Activated CD4-positive, alpha-beta memory T cell treated with anti-CD3 and anti-CD28 coated beads for 36 hours (primary cell): ENCODE measurements at regions of chr7 and their contacts with region 1.

Region 1: GRCh38 chr7:87797798-87798403 is 78.3 kb downstream of the SLC25A40 start:
- DNase-seq: no peak
- H3K4me3 Mint-ChIP-seq: no peak overlapping the region
- H3K27ac Mint-ChIP-seq: no peak overlapping the region
- H3K4me1 Mint-ChIP-seq: no peaks in the 10 kb centered on the region
- H3K27me3 Mint-ChIP-seq: peaks cover 8% of the 10 kb centered on the region

Region 2: GRCh38 chr7:87658553-87658952 is 139.3 kb before region 1 on chr7:
- CTCF ChIA-PET with region 1: no interaction called
- POLR2A ChIA-PET with region 1: no interaction called
- intact Hi-C with region 1: no loop called
- DNase-seq: no peak
- H3K4me3 Mint-ChIP-seq: no peak overlapping the region
- H3K27ac Mint-ChIP-seq: no peak overlapping the region
- H3K4me1 Mint-ChIP-seq: no peaks in the 10 kb centered on the region
- H3K27me3 Mint-ChIP-seq: peaks cover 5% of the 10 kb centered on the region

Region 3: DNA sequence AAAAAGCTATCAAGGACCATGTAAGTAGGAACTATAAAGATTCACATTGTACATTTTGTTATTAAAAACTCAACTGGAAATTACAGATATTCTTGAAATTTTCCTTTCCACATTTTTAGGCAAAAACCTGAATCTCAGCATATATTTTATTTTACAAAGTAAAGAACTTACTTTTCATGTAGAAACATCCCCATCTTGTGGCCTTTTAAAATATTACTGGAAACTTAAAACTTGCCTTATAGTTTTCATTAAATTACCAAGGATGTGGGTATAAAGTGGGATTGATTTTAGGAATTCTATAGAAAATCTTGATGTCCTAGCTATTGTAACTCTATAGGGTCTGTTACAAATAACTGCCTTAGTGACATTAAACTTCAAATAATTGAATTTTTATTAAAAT is 89.0 kb after region 1 on chr7:
- CTCF ChIA-PET with region 1: interaction called, 35 read pairs
- POLR2A ChIA-PET with region 1: no interaction called
- intact Hi-C with region 1: loop called (anchors 1 kb)
- DNase-seq: no peak
- H3K4me3 Mint-ChIP-seq: no peak overlapping the region
- H3K27ac Mint-ChIP-seq: no peak overlapping the region
- H3K4me1 Mint-ChIP-seq: peaks cover 4% of the 10 kb centered on the region
- H3K27me3 Mint-ChIP-seq: no peaks in the 10 kb centered on the region

Region 4: GRCh38 chr7:87926581-87927461 is 128.9 kb after region 1 on chr7:
- CTCF ChIA-PET with region 1: no interaction called
- POLR2A ChIA-PET with region 1: no interaction called
- intact Hi-C with region 1: loop called (anchors 1 kb)
- DNase-seq: peak; percentile 20
- H3K4me3 Mint-ChIP-seq: no peak overlapping the region
- H3K27ac Mint-ChIP-seq: no peak overlapping the region
- H3K4me1 Mint-ChIP-seq: peaks cover 2% of the 10 kb centered on the region
- H3K27me3 Mint-ChIP-seq: no peaks in the 10 kb centered on the region

Region 5: DNA sequence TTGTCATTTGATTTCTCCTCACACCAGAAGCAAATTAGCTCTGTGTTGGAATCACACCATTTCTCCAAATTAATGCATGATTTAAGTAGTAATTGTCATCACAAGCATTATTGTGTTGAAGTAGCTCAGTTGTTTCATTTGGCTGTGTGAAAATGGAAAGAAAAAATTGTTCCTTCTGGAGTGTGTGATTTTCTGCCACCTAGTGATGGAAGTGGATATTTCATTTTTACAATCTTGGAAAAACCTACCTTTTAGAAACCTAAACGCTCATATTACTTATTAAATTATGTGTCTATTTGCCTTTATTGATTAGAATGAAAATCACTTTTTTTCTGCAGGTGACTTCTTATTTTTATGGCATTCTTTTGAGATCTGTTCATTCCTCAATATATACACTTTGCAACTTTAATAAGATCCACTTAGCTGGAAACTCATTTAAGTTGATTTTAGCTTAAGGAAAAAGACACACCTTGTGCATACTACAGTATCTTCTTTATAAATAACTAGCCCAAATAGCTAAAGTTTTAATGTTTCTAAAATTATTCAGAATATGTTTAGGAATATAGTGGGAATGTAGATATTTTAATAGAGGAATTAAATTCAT is 371.9 kb after region 1 on chr7:
- CTCF ChIA-PET with region 1: no interaction called
- POLR2A ChIA-PET with region 1: no interaction called
- intact Hi-C with region 1: loop called (anchors 1 kb)
- DNase-seq: no peak
- H3K4me3 Mint-ChIP-seq: no peak overlapping the region
- H3K27ac Mint-ChIP-seq: no peak overlapping the region
- H3K4me1 Mint-ChIP-seq: no peaks in the 10 kb centered on the region
- H3K27me3 Mint-ChIP-seq: no peaks in the 10 kb centered on the region